ENCODE measurements at regions of chr11 and their contacts with region 1.

Region 1: GRCh38 chr11:69638941-69639681 is 1.8 kb upstream of the CCND1 start:
- DNase-seq: peak; percentile 68

Region 2: GRCh38 chr11:69296890-69297786 is 342.0 kb before region 1 on chr11:
- in situ Hi-C with region 1: loop called (anchors 10 kb)
- DNase-seq: peak; percentile 99

Region 3: DNA sequence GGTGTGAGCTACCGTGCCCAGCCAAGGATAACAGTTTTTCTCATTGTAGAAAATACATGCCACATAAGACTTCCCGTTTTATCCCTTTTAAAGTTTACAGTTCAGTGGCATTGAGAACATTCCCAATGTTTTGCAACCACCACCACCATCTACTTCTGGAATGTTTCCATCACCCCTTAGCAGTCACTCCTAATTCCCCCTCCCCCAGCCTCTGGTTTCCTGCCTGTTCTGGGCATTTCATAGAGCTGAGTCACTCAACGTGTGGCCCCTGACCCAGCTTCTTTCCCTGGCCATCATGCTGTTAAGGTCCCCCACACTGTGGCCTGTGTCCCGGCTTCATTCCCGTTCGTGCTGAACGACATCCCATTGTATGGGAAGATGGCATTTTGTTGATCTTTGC is 105.3 kb after region 1 on chr11:
- in situ Hi-C with region 1: no loop called
- DNase-seq: no peak

Measured in KBM-7 (cell line).